ENCODE measurements at regions of chr9 and their contacts with region 1.

Region 1: DNA sequence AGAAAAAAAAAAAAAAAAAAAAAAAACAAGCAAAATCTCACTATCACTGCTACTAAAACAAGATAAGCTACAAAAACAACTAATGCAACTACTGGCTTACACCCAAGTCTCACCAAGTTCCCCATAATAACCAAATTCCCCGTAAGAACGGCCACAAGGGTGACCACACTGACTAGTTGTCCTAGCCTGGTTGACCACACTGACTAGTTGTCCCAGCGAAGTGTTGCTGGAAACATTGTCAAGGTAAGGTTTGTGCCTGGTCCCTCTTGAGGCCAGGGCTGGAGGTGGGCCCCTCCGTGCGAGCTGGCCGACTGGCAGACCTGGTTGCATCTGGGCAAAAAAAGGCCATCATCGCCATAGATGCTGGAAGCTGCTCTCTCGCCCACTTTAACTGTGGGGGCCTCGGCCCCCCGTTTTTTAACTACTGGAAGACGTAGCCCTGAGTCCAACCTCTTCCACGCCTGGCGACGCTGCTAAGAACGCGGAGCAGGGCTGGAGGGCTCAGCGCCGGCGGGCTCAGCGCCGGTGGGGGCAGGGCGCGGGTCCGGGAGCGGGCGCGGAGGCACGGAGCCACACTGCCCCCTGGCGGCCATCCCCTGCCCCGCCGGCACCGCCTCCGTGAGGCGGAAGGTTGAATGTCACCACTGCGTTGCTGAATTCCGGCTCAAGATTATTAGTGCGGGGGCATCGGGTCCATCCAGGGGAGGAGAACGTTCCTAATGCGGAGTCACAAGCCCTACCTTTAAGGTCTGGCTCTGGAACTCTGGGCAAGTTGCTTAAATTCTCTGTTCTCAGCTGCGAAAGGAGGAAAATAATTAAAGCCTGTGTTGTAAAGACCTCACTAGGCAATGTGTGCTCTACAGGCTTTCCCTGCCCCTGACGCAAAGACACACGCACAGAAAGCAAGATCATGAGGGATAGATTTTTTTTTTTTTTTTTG is 84.0 kb downstream of the HSD17B3 start:
- DNase-seq: no peak
- H3K4me3 ChIP-seq: peak overlapping the region; percentile 2 to 58 (median 34)
- H3K27ac ChIP-seq: peak overlapping the region in 3 of 4 donors; percentile 34 to 75 (median 72)
- H3K4me1 ChIP-seq: peaks cover 10 to 30% (median 14%) of the 10 kb centered on the region in 3 donors
- H3K27me3 ChIP-seq: peaks cover 0 to 68% (median 0%) of the 10 kb centered on the region in 4 donors
- CTCF ChIP-seq: peak; percentile 95 to 99 (median 98)
- POLR2A ChIP-seq: no peak

Region 2: DNA sequence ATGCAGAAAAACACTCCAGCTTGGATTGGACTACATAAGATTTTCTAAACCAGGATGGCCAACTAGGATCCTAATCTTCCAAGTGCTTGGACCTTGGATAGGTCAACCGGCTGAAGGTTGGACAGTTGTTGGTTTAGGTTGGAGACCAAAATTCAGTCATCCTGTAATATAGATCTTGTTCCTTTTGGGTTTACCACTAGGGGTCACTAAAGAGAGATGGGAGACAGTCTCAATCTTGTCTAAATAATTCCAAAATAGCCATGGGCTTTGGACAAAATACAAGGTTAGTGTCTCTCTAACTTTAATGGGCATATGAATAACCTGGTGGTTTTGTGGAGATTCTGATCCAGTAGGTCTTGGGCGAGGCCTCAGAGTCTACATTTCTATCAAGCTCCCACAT is 491.3 kb before region 1 on chr9:
- intact Hi-C with region 1: loop called (anchors 10 kb)
- DNase-seq: no peak
- H3K4me3 ChIP-seq: no peak overlapping the region
- H3K27ac ChIP-seq: no peak overlapping the region
- H3K4me1 ChIP-seq: no peaks in the 10 kb centered on the region
- H3K27me3 ChIP-seq: peaks cover 0 to 2% (median 0%) of the 10 kb centered on the region in 4 donors
- CTCF ChIP-seq: peak; percentile 26 to 73 (median 57)
- POLR2A ChIP-seq: no peak

Region 3: DNA sequence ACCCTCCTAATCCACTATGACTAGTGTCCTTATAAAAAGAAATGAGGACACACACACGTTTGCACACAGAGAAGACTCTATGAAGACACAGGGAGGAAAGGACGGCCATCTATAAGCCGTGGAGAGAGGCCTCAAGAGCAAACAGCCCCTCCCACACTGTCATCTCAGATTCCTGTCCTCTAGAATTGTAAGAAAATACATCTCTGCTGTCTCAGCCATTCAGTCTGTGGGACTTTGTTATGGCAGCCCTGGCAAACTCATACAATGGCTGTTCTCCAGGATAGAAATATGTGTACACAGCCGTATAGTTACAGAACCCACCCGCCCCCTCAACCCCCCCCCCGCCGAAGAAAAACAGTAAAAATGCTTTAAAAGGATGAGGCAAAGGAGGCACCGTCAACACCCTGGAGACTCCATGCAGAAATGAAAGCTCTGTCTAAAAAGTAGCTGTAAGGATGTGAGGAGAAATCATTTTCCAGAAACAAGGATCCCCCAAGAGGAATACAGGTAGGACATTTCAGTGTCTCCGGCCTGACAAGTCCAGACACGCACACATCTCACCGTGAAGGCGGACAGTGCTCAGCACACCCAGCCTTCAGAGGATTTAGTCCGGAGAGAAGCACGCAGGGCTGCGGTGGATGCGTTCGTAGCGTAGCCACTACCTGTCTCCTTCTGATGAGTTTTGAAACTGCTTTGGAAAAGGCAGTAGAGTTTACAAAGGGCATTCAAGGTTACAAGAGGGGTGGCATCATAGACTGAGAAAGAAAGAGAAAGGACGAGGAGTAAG is 453.3 kb before region 1 on chr9:
- intact Hi-C with region 1: no loop called
- DNase-seq: no peak
- H3K4me3 ChIP-seq: peak overlapping the region in 3 of 4 donors; percentile 6 to 51 (median 19)
- H3K27ac ChIP-seq: peak overlapping the region in 3 of 4 donors; percentile 25 to 67 (median 42)
- H3K4me1 ChIP-seq: peaks cover 0 to 14% (median 0%) of the 10 kb centered on the region in 3 donors
- H3K27me3 ChIP-seq: peaks cover 0 to 7% (median 0%) of the 10 kb centered on the region in 4 donors
- CTCF ChIP-seq: no peak
- POLR2A ChIP-seq: no peak

Measured in esophagus squamous epithelium (tissue), 5 donors.